Aorta (tissue), 5 donors: ENCODE measurements at regions of chr5 and their contacts with region 1.

Region 1: GRCh38 chr5:41695920-41696582 is 174.2 kb downstream of the OXCT1 start:
- DNase-seq: no peak
- ATAC-seq: no peak
- H3K4me3 ChIP-seq: no peak overlapping the region
- H3K27ac ChIP-seq: no peak overlapping the region
- H3K4me1 ChIP-seq: no peaks in the 10 kb centered on the region
- H3K27me3 ChIP-seq: no peaks in the 10 kb centered on the region

Region 2: DNA sequence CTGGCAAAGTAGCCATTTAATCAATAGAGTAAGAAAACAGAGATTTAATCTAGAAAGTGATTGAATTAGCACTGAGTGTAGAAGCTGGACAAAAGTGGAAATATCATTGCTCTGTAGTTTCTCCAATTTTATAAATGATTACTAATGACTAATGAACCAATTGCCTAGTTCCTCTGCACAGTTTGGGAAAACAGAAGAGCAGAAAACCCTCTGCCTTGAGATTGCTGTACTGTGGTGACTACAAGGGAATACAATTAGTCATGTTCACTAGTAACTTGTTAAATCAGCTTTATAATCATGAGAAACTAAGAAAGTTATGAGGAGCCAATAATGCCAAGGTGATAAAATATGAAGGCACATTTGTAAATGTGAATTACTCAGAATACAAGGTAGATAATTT is 461.6 kb before region 1 on chr5:
- intact Hi-C with region 1: no loop called
- DNase-seq: no peak
- ATAC-seq: peak; percentile 19
- H3K4me3 ChIP-seq: no peak overlapping the region
- H3K27ac ChIP-seq: no peak overlapping the region
- H3K4me1 ChIP-seq: no peaks in the 10 kb centered on the region
- H3K27me3 ChIP-seq: no peaks in the 10 kb centered on the region

Region 3: GRCh38 chr5:41843456-41844370 is 147.7 kb after region 1 on chr5:
- intact Hi-C with region 1: loop called (anchors 5 kb)
- DNase-seq: no peak
- ATAC-seq: no peak
- H3K4me3 ChIP-seq: no peak overlapping the region
- H3K27ac ChIP-seq: no peak overlapping the region
- H3K4me1 ChIP-seq: peaks cover 0 to 2% of the 10 kb centered on the region in 2 donors
- H3K27me3 ChIP-seq: no peaks in the 10 kb centered on the region